ENCODE measurements at regions of chr10 and their contacts with region 1.

Region 1: DNA sequence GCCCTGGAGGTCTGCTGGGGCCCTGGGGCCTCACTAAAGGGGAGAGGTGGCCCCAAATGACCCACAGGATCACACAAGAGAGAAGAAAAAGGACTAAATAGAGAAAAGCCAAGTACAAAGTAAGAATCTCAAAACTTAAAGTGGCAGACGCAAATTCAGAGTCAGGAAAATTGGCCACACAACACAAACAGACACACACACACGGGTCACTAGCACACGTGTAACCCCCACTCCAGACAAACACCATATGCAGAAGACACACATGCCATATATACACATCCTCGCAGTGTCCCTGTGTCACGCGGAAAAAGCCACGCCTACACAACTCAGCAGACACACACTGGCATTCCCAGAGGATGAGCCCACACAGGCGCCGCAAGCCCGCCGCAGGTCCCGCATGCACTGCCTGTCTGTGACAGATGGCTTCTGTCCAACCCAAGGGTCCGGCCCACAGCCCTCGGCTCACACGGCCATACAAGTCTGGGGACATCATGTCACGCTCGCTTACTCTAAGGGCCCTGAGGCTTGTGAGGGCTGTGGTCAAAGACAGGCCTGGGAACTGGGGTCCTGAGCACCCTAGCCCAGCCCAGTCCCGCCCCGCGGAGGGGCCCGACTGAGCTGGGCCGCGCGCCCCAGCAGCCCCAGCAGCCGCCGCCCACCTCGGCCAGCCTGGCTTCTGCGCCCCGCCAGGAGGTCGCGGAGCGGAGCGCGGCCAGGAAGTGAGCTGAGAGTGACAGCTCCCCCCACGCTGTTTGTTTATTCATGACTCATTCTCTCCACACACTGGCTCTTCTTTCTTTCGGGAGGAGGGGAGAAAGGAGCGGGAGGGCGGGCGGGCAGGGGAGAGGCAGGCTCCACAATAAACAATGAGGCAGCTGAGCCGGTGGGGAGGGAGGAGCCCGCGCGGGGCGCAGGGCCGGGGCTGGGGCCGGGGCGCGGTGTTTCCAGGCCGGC is 95.5 kb upstream of the ZMIZ1 start:
- DNase-seq: peak; percentile 86
- ATAC-seq: peak; percentile 63
- H3K4me3 Mint-ChIP-seq: peak overlapping the region; percentile 58
- H3K27ac Mint-ChIP-seq: peak overlapping the region; percentile 77
- H3K4me1 Mint-ChIP-seq: peaks cover 32% of the 10 kb centered on the region
- H3K27me3 Mint-ChIP-seq: peaks cover 2% of the 10 kb centered on the region

Region 2: GRCh38 chr10:78763651-78764311 is 209.4 kb before region 1 on chr10:
- CTCF ChIA-PET with region 1: no interaction called
- POLR2A ChIA-PET with region 1: no interaction called
- intact Hi-C with region 1: loop called in 1 of 2 experiments (anchors 2 kb)
- DNase-seq: peak; percentile 85
- ATAC-seq: peak; percentile 88
- H3K4me3 Mint-ChIP-seq: no peak overlapping the region
- H3K27ac Mint-ChIP-seq: peak overlapping the region; percentile 91
- H3K4me1 Mint-ChIP-seq: peaks cover 21% of the 10 kb centered on the region
- H3K27me3 Mint-ChIP-seq: no peaks in the 10 kb centered on the region

Region 3: GRCh38 chr10:78875932-78876331 is 97.3 kb before region 1 on chr10:
- CTCF ChIA-PET with region 1: no interaction called
- POLR2A ChIA-PET with region 1: no interaction called
- intact Hi-C with region 1: no loop called
- DNase-seq: no peak
- ATAC-seq: no peak
- H3K4me3 Mint-ChIP-seq: no peak overlapping the region
- H3K27ac Mint-ChIP-seq: no peak overlapping the region
- H3K4me1 Mint-ChIP-seq: peaks cover 2% of the 10 kb centered on the region
- H3K27me3 Mint-ChIP-seq: peaks cover 13% of the 10 kb centered on the region

Region 4: DNA sequence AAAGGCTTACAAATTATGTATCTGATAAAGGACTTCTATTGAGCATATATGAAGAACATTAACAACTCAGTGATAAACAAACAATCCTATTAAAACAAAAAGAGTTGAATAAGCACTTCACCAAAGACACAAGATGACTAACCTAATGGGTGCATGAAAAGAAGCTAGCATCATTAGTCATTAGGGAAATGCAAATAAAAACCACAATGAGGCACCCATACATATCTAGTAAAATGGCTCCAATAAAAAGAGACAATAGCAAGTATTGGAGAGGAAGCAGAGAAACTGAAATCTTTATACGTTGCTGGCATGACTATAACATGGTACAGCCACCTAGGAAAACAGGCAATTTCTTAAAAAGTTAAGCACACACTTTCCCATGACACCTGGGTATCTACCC is 18.0 kb after region 1 on chr10:
- CTCF ChIA-PET with region 1: interaction called, 7 read pairs
- POLR2A ChIA-PET with region 1: interaction called, 12 read pairs
- intact Hi-C with region 1: loop called (anchors 1 kb)
- DNase-seq: no peak
- ATAC-seq: peak; percentile 99
- H3K4me3 Mint-ChIP-seq: no peak overlapping the region
- H3K27ac Mint-ChIP-seq: no peak overlapping the region
- H3K4me1 Mint-ChIP-seq: peaks cover 10% of the 10 kb centered on the region
- H3K27me3 Mint-ChIP-seq: no peaks in the 10 kb centered on the region

Region 5: GRCh38 chr10:79068562-79069324 is 95.5 kb after region 1 on chr10 and contains the start of gene ZMIZ1:
- CTCF ChIA-PET with region 1: interaction called, 3 read pairs
- POLR2A ChIA-PET with region 1: interaction called, 3 read pairs
- intact Hi-C with region 1: loop called (anchors 1 to 2 kb)
- DNase-seq: peak; percentile 89
- ATAC-seq: peak; percentile 72
- H3K4me3 Mint-ChIP-seq: peak within 1 kb of the TSS; percentile 73
- H3K27ac Mint-ChIP-seq: peak within 1 kb of the TSS; percentile 58
- H3K4me1 Mint-ChIP-seq: peaks cover 32% of the 10 kb centered on the region
- H3K27me3 Mint-ChIP-seq: peaks cover 3% of the 10 kb centered on the region
- total RNA-seq, gene ZMIZ1: 33.9 to 34.3 TPM

Region 6: DNA sequence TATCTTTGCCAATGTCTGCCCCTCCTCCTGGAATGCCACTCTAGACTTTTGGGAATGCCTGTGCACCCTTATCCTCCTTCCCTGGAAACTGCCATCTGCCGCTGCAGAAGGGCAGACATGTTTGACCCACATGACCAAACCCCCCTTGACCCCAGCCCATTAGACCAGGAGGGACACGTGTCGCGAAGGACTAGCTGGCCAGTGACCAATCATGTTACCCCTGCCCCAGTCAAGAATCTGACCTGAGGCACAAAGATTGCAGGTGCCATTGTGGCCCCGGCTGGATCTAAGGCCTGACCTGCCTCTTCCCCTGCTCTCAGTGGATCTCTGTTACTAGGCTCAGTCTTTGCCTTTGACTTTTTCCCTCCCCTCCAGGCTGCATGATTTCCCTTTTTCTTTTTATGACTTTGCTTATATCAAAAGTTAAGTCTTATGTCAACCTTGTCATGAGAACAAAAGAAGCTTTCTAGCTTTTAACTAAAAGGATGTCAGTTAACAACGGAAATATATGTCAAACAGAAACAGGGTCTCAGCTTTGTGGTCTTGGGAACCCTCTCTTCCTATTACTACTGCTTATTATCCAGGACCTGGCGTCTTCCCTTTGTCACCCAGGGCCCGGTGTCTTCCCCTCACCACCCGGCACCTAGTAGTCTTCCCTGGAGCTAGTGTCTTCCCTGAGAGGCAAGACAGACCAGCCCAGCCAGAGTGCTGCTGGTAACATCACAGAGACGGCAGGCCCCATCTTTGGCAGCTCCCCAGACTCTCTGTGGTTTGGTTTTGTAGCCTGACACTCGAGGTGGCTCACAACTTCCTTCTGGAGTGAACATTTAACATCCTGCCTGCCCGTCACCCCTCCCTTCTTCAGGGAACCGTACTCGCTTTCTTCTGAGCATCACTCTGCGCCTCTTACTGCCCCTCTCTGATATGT is 349.7 kb after region 1 on chr10:
- CTCF ChIA-PET with region 1: no interaction called
- POLR2A ChIA-PET with region 1: no interaction called
- intact Hi-C with region 1: loop called in 1 of 2 experiments (anchors 5 kb)
- DNase-seq: peak; percentile 91
- ATAC-seq: peak; percentile 75
- H3K4me3 Mint-ChIP-seq: peak overlapping the region; percentile 46
- H3K27ac Mint-ChIP-seq: peak overlapping the region; percentile 94
- H3K4me1 Mint-ChIP-seq: peaks cover 70% of the 10 kb centered on the region
- H3K27me3 Mint-ChIP-seq: no peaks in the 10 kb centered on the region

Region 7: GRCh38 chr10:79445141-79445976 is 472.1 kb after region 1 on chr10 and contains the start of gene ZCCHC24:
- CTCF ChIA-PET with region 1: no interaction called
- POLR2A ChIA-PET with region 1: no interaction called
- intact Hi-C with region 1: loop called in 1 of 2 experiments (anchors 10 kb)
- DNase-seq: peak; percentile 93
- ATAC-seq: peak; percentile 97
- H3K4me3 Mint-ChIP-seq: peak within 1 kb of the TSS; percentile 65
- H3K27ac Mint-ChIP-seq: no peak within 1 kb of the TSS
- H3K4me1 Mint-ChIP-seq: peaks cover 16% of the 10 kb centered on the region
- H3K27me3 Mint-ChIP-seq: peaks cover 7% of the 10 kb centered on the region
- total RNA-seq, gene ZCCHC24: 0.53 to 0.75 TPM

Measured in activated CD4-positive, alpha-beta T cell treated with anti-CD3 and anti-CD28 coated beads for 36 hours (primary cell).